Activated CD4-positive, alpha-beta memory T cell treated with anti-CD3 and anti-CD28 coated beads for 36 hours (primary cell): ENCODE measurements at regions of chr7 and their contacts with region 1.

Region 1: GRCh38 chr7:108497082-108497725 is 28.7 kb downstream of the PNPLA8 start:
- DNase-seq: peak; percentile 20
- H3K4me3 Mint-ChIP-seq: no peak overlapping the region
- H3K27ac Mint-ChIP-seq: no peak overlapping the region
- H3K4me1 Mint-ChIP-seq: no peaks in the 10 kb centered on the region
- H3K27me3 Mint-ChIP-seq: no peaks in the 10 kb centered on the region

Region 2: DNA sequence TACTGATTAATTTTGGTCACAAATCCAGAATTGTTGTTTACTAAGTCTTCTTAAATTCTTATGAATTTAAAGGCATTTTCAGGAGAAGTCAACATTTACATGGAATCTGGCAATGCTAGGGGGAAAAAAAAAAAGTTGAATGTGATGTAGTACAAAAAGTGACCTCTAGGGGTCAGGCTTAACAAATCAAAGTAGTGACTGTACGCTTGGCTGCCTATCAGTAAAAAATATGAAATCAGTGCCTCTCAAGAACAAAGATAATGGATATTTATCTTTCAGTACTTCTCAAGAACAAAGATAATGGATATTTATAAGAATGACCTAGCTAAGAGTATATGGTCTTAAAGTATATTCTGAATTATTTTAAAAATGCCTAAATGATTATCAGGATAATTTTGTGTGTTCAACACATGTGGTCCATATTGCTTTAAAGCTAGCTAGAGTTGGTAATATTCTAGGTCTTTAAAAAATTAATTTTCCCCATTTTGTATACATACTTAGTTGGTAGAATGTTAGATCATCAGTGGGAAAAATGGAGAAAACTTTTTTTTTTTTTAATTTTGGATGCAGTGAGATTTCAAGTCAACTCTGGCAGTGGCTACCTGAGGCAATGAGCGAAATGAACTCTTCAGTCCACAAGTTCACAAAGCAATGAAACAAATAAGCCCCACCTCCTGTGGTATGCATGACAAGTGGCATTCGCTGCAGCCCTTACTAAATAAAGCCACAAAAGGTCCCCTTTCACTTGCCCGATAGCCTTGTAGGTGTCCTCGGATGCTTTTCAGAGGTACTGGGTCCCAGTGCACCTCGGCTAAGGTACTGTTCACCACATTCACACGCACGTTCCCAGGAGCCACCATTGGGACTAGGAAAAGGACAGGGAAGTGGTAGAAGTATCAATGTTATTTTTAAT is 315.9 kb before region 1 on chr7:
- CTCF ChIA-PET with region 1: interaction called, 17 read pairs
- POLR2A ChIA-PET with region 1: no interaction called
- intact Hi-C with region 1: loop called (anchors 1 kb)
- DNase-seq: no peak
- H3K4me3 Mint-ChIP-seq: no peak overlapping the region
- H3K27ac Mint-ChIP-seq: no peak overlapping the region
- H3K4me1 Mint-ChIP-seq: no peaks in the 10 kb centered on the region
- H3K27me3 Mint-ChIP-seq: peaks cover 2% of the 10 kb centered on the region

Region 3: DNA sequence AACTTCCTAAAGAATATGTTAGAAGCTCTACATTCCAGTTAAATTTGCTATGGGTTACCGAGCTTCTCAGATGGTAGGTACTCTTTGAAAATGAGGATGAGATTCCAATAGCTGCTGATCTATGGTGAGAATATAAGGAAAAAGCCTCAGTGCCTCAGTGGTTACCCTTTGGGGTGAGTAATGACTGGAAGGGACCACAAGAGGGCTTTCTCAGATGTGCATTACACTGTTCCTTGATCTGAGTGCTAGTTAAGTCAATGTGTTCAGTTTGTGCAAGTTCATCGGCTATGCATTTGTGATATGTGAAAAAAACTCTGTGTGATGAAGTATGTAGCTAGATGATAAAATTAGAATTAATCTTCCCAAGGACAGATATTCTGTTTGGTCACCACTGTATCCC is 44.5 kb before region 1 on chr7:
- CTCF ChIA-PET with region 1: interaction called, 15 read pairs
- POLR2A ChIA-PET with region 1: no interaction called
- intact Hi-C with region 1: loop called (anchors 1 kb)
- DNase-seq: no peak
- H3K4me3 Mint-ChIP-seq: no peak overlapping the region
- H3K27ac Mint-ChIP-seq: no peak overlapping the region
- H3K4me1 Mint-ChIP-seq: peaks cover 6% of the 10 kb centered on the region
- H3K27me3 Mint-ChIP-seq: peaks cover 52% of the 10 kb centered on the region

Region 4: DNA sequence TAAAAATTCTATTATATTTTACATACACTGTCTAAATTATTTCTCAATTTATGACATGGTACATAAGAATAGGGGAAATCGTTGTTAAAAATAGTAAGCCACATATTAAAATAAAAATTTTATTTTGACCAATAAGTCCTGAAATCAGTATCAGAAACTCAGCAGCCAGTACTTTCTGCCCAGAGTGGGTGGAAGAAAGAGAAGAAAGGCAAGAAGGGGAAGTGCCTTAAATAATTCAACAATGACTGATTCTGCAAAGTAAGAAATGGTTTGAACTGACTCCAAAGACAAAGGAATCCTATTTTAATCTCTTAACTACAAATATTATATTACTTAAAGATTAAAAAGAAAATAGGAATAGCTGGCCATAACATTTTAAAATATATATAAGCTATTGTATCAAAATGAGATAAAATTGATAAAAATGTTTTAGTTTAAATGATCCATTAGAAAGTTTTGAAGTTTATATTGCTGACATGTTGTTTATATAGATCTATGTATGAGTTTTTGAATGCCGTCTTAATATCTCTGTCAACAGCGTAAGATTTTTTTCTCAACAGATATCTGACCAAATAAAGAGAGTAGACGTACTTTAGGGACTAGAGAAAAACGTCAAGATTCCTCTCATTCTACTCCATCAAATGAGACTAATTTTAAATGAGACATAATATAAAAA is 10.8 kb before region 1 on chr7:
- CTCF ChIA-PET with region 1: interaction called, 17 read pairs
- POLR2A ChIA-PET with region 1: no interaction called
- intact Hi-C with region 1: no loop called
- DNase-seq: no peak
- H3K4me3 Mint-ChIP-seq: no peak overlapping the region
- H3K27ac Mint-ChIP-seq: no peak overlapping the region
- H3K4me1 Mint-ChIP-seq: no peaks in the 10 kb centered on the region
- H3K27me3 Mint-ChIP-seq: no peaks in the 10 kb centered on the region

Region 5: DNA sequence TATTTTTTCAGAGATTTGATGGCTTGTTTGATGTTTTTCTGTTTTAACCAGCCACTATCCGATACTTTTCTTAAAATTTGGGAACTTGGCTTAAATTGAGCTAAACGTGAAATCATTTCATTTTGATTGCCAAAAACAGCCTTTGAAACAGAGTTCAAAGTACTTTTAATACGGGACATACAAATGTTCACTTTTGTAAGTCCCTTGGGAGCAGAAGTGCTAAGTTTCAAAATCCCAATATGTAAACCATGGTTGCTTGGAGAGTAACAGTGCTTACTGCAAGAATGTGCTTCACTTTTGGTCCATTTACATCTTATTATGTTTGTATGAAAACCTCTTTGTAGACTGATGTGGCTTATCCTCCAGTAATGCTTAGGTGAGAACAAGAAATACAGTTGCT is 17.8 kb after region 1 on chr7:
- CTCF ChIA-PET with region 1: interaction called, 16 read pairs
- POLR2A ChIA-PET with region 1: no interaction called
- intact Hi-C with region 1: no loop called
- DNase-seq: no peak
- H3K4me3 Mint-ChIP-seq: no peak overlapping the region
- H3K27ac Mint-ChIP-seq: no peak overlapping the region
- H3K4me1 Mint-ChIP-seq: peaks cover 16% of the 10 kb centered on the region
- H3K27me3 Mint-ChIP-seq: no peaks in the 10 kb centered on the region